ENCODE measurements at regions of chr18 and their contacts with region 1.

Region 1: DNA sequence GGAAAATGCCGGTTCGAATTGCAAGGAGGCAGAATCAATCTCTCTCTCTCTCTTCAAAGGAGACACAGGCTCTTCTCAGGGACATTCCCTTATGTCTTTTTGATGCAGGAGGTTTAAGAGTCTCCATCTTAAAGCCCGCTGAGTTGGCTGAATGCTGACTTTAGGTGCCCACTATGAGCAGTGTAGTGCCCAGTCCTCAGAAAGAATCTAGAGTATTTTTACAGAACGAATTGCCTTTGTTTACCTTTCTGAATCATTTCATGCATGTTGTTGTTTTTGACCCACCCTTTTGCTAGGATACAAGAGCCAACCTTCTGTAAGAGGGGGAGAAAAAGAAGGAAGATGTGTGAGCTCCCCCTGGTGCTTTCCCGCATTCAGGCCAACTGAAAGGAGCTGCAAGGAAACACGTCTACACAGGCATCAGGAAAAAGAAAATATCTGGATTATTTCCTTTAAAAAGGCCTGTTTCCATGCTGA is 193.5 kb upstream of the TCF4 start:
- DNase-seq: peak in 3 of 4 experiments; percentile 11 to 54 (median 42)
- ATAC-seq: peak; percentile 75; the same call in 2 of the 3 replicates
- H3K4me3 ChIP-seq: no peak overlapping the region
- H3K27ac ChIP-seq: no peak overlapping the region
- H3K4me1 ChIP-seq: peaks cover 3 to 10% of the 10 kb centered on the region in 2 experiments; a peak in 4 of 5 replicates
- H3K27me3 ChIP-seq: no peaks in the 10 kb centered on the region
- CTCF ChIP-seq: peak; percentile 49 to 66 (median 64); a peak in 5 of 6 replicates
- EP300 ChIP-seq: no peak
- POLR2A ChIP-seq: no peak
- RAD21 ChIP-seq: peak; percentile 80 to 83

Region 2: GRCh38 chr18:55343396-55344073 is 438.0 kb before region 1 on chr18:
- CTCF ChIA-PET with region 1: no interaction called
- POLR2A ChIA-PET with region 1: interaction called, 4 read pairs
- in situ Hi-C with region 1: no loop called
- intact Hi-C with region 1: loop called (anchors 5 kb)
- DNase-seq: peak; percentile 5 to 19 (median 8)
- ATAC-seq: no peak
- H3K4me3 ChIP-seq: no peak overlapping the region
- H3K27ac ChIP-seq: no peak overlapping the region
- H3K4me1 ChIP-seq: no peaks in the 10 kb centered on the region
- H3K27me3 ChIP-seq: no peaks in the 10 kb centered on the region
- CTCF ChIP-seq: peak in 2 of 3 experiments; percentile 33 to 56; a peak in 2 of 6 replicates
- EP300 ChIP-seq: no peak
- POLR2A ChIP-seq: no peak
- RAD21 ChIP-seq: peak; percentile 31 to 66

Region 3: DNA sequence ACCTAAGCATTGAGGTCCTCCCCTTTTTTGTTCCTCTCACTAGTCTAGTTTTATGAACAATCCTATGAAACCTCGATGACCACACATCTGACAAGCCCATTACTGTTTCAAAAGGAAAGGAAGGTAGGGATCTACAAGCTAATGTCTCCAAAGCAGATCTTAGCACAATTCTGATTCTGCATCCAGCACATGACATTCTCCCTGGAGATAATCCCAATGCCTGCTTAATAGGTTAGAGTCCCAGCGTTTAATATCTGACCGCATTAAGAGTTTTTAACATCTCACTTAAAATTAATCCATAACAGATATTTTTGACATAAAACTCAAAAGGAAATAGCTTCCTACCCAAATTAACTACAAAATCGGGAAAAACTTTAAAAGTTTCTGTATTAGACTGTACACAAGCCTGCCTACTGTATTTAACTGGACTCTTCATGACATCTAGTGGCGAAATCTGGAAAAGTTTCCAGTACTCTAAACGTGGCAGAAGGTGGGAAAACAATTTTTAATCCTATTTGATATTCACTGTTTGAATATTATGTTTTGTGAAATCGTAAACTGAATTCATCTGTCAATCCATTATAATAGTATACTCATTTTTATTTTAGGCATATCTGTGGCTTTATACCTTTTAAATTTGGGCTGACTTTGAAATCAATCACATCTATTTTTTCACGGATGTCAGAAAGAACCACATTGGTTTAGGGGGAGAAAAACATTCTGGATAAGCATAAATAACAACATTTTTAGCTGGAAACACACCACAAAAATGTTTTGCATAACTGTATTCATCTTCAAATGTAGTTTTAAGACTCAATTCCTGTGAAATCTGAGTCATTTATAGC is 794.5 kb after region 1 on chr18:
- CTCF ChIA-PET with region 1: no interaction called
- POLR2A ChIA-PET with region 1: no interaction called
- in situ Hi-C with region 1: no loop called
- intact Hi-C with region 1: loop called (anchors 10 kb)
- DNase-seq: peak; percentile 29 to 53 (median 34)
- ATAC-seq: peak; percentile 87
- H3K4me3 ChIP-seq: no peak overlapping the region
- H3K27ac ChIP-seq: no peak overlapping the region
- H3K4me1 ChIP-seq: peaks cover 0 to 4% of the 10 kb centered on the region in 2 experiments; a peak in 1 of 5 replicates
- H3K27me3 ChIP-seq: no peaks in the 10 kb centered on the region
- CTCF ChIP-seq: peak; percentile 41 to 57 (median 47); a peak in 5 of 6 replicates
- EP300 ChIP-seq: no peak
- POLR2A ChIP-seq: no peak
- RAD21 ChIP-seq: peak; percentile 75 to 79

Measured in K562 (cell line).